ENCODE measurements at regions of chr17 and their contacts with region 1.

Region 1: DNA sequence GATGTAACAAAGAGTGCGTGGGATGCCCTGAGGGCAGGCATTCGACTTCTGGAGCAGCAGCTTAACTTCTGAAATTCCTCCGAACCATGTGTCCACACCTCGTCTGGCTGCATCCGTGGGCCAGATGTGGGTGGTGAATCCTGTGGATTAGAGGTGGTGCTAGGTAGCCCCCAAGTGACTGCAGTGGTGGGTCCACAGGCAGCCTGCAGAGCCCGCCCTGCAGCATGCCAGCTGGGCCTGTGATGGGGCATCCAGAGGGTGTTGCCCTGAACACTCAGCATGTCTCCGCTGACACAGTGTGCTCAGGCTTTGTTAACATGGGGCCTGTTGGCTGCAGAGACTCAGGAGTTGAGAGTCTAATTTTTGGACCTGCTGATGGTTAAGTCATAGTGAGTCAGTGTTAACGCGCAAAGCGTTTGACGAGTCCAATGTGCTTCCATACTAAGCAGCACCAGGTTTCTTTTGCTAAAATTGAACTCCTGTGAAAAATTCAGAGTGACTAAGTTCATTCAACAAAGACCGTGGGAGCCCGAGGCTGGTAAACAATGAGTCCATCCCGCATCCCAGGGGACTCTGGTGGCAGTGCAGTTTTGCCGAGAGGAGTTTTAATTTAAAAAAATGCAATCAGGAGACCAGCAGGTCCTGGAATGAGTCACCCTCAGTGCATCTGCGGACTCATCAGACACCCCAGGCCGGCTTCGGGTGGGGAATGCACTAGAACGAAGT is 3.7 kb upstream of the NPB start:
- DNase-seq: no peak
- H3K4me3 ChIP-seq: no peak overlapping the region
- H3K27ac ChIP-seq: no peak overlapping the region
- H3K4me1 ChIP-seq: peaks cover 8 to 22% (median 16%) of the 10 kb centered on the region in 4 donors
- H3K27me3 ChIP-seq: peaks cover 0 to 25% (median 8%) of the 10 kb centered on the region in 4 donors
- CTCF ChIP-seq: no peak
- EP300 ChIP-seq: no peak
- POLR2A ChIP-seq: no peak

Region 2: DNA sequence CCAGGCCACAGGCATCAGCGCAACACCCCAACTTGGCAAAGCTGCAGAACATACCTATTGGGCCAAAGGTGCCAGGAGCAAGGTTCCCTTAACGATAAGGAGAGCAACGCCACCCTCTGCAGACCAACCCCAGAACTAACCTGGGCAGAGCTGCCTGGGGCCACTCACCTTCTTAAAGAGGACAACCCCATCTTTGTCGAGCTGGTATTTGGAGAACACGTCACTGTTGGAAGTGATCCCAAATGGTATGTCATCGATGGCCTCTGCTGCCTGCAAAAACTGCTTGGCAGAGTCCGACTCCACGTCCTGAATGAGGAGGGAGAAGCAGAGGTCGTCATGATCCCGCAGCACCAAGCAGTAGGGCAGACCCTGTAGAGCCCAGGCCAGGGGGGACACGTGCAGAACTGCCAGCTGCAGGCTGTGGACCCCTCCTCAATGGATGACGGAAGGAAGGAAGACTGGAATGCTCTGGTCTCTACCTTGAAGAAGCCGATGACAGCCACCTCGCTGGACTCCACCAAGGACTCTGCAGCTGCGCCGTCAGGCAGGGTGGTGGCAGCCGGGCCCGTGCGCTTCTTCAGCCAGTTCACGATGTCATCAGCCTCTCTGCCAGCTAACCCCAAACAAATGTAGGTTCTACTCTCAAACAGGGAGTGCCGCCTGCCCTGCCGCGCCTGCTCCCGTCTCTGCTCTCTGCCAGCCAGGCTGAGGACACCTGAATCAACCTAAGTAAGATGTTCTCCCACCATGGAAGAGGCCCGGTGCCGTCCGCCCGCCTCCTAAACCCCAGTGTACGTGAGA is 43.1 kb before region 1 on chr17:
- intact Hi-C with region 1: loop called (anchors 5 kb)
- DNase-seq: no peak
- H3K4me3 ChIP-seq: no peak overlapping the region
- H3K27ac ChIP-seq: no peak overlapping the region
- H3K4me1 ChIP-seq: peaks cover 20 to 54% (median 37%) of the 10 kb centered on the region in 4 donors
- H3K27me3 ChIP-seq: no peaks in the 10 kb centered on the region
- CTCF ChIP-seq: no peak
- EP300 ChIP-seq: no peak
- POLR2A ChIP-seq: no peak

Region 3: GRCh38 chr17:81867170-81867990 is 30.9 kb before region 1 on chr17:
- intact Hi-C with region 1: no loop called
- DNase-seq: no peak
- H3K4me3 ChIP-seq: no peak overlapping the region
- H3K27ac ChIP-seq: peak overlapping the region; percentile 97 to 99 (median 99)
- H3K4me1 ChIP-seq: peaks cover 54 to 79% (median 65%) of the 10 kb centered on the region in 4 donors
- H3K27me3 ChIP-seq: no peaks in the 10 kb centered on the region
- CTCF ChIP-seq: no peak
- EP300 ChIP-seq: no peak
- POLR2A ChIP-seq: no peak

Measured in esophagus muscularis mucosa (tissue), 4 donors.